Common myeloid progenitor, CD34-positive (primary cell): ENCODE measurements at regions of chr1 and their contacts with region 1.

Region 1: GRCh38 chr1:11037740-11038182 is 9.3 kb downstream of the MASP2 start:
- DNase-seq: peak; percentile 86 to 95 (median 90)
- H3K4me3 ChIP-seq: no peak overlapping the region
- H3K27ac ChIP-seq: no peak overlapping the region
- H3K4me1 ChIP-seq: peaks cover 0 to 2% (median 0%) of the 10 kb centered on the region in 4 experiments
- H3K27me3 ChIP-seq: peaks cover 0 to 3% (median 0%) of the 10 kb centered on the region in 5 experiments

Region 2: DNA sequence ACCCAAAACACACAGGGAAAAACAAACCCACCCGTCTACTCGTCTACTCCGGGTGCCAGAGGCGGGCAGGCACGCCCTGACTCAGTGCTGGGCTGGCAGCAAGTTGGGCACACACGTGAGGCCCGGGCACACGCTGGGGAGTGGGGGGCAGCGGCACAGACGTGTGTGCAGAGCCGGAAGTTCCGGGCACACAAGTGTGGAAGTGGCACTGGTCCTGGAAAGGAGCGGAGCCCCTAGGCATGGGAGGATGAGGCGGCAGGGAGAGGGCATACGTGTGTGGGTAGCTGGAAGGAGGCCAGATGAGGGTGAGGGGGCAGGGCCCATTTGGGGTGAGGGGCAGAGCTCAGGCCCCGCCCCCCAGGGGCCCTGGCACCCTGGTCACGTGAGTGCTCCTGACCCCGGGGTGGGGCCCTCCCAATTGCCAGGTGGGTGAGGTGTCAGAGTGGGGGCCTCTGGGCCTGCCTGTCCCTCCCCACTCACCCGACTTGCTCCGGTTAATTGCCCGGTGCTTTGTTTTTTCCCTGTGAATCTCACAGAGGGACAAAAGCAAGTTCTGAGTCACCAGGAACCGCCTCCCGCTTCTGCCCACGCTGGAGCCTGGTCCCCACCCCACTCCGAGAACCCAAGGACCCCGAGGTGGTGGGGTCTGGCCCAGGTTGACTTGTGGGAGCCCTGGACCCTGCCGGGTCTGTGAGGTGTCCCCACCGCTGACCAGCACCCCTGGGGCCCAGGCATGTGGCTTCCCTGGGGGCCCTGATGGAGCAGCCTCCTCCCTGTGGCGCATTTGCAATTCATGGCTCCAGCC is 136.5 kb before region 1 on chr1:
- CTCF ChIA-PET with region 1: no interaction called
- POLR2A ChIA-PET with region 1: no interaction called
- DNase-seq: no peak
- H3K4me3 ChIP-seq: no peak overlapping the region
- H3K27ac ChIP-seq: no peak overlapping the region
- H3K4me1 ChIP-seq: peaks cover 3 to 69% (median 42%) of the 10 kb centered on the region in 4 experiments
- H3K27me3 ChIP-seq: no peaks in the 10 kb centered on the region

Region 3: GRCh38 chr1:11053758-11054137 is 16.0 kb after region 1 on chr1:
- CTCF ChIA-PET with region 1: interaction called, 11 read pairs
- POLR2A ChIA-PET with region 1: interaction called, 3 read pairs
- DNase-seq: peak in 2 of 3 donors; percentile 22 to 29
- H3K4me3 ChIP-seq: no peak overlapping the region
- H3K27ac ChIP-seq: no peak overlapping the region
- H3K4me1 ChIP-seq: peaks cover 0 to 6% (median 4%) of the 10 kb centered on the region in 4 experiments
- H3K27me3 ChIP-seq: peaks cover 0 to 10% (median 0%) of the 10 kb centered on the region in 5 experiments

Region 4: GRCh38 chr1:11059990-11060830 is 22.4 kb after region 1 on chr1 and contains the start of gene SRM:
- CTCF ChIA-PET with region 1: interaction called, 17 read pairs
- POLR2A ChIA-PET with region 1: interaction called, 3 read pairs
- DNase-seq: peak; percentile 86 to 93 (median 93)
- H3K4me3 ChIP-seq: peak within 1 kb of the TSS; percentile 78 to 92 (median 84)
- H3K27ac ChIP-seq: peak within 1 kb of the TSS in 1 of 2 experiments; percentile 80
- H3K4me1 ChIP-seq: peaks cover 6 to 27% (median 19%) of the 10 kb centered on the region in 4 experiments
- H3K27me3 ChIP-seq: no peaks in the 10 kb centered on the region

Region 5: DNA sequence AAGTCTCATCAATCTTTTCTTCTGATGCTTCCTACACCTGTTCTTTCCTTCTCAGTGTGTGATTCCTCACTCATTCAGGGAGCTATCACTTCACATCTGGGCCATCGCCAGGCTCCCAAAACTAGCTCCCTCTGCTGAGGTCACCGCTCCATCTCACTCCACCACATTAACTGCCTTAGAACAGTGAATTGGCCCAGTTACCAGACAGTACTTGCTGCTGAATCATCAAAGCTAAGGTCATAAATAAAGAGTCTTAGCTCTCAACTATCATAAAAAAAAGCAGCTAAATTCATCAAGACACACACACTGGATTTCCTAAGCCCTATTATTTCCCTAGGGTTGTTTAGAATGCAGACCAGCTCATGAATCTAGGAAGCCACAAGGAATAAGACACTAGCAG is 40.9 kb after region 1 on chr1:
- CTCF ChIA-PET with region 1: interaction called, 10 read pairs
- POLR2A ChIA-PET with region 1: no interaction called
- DNase-seq: no peak
- H3K4me3 ChIP-seq: no peak overlapping the region
- H3K27ac ChIP-seq: no peak overlapping the region
- H3K4me1 ChIP-seq: no peaks in the 10 kb centered on the region
- H3K27me3 ChIP-seq: no peaks in the 10 kb centered on the region

Region 6: GRCh38 chr1:11645670-11646265 is 608.0 kb after region 1 on chr1:
- CTCF ChIA-PET with region 1: interaction called, 26 read pairs
- POLR2A ChIA-PET with region 1: no interaction called
- DNase-seq: peak; percentile 74 to 90 (median 84)
- H3K4me3 ChIP-seq: no peak overlapping the region
- H3K27ac ChIP-seq: no peak overlapping the region
- H3K4me1 ChIP-seq: peaks cover 0 to 14% (median 9%) of the 10 kb centered on the region in 4 experiments
- H3K27me3 ChIP-seq: peaks cover 0 to 32% (median 11%) of the 10 kb centered on the region in 5 experiments